Posterior vena cava (tissue), 2 donors: ENCODE measurements at regions of chr11 and their contacts with region 1.

Region 1: DNA sequence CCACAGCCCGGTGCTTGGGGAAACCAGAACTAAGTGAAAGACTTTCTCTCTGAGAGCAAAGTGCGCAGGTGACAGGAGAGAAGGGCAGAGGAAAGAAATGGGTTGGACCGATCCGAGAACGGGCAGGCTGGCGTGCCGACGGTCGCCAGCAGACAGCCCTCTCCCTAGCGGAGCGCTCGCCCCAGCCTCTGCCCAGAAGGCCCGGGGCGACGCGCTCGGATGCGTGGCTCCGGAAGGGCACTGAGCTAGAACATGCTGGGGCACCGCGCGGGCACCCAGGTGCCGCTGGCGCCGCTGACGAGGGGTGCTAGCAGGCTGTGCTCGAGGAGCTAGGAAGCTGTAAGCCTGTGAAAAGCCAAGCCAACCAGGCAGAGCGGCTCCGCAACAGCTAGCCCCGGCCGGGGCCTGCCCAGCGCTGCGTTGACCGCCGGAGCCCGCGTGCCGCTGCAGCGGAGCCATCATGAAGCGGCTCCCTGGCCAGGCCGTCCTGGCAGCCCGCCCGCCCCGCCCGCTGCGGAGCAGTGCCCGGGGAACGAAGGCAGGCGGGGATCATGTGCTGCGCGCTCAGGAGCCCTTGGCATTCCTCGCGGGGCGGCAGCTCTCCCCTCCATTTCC is 22.1 kb upstream of the RRAS2 start:
- DNase-seq: peak; percentile 89

Region 2: GRCh38 chr11:14320020-14320419 is 61.0 kb before region 1 on chr11:
- intact Hi-C with region 1: no loop called
- DNase-seq: no peak

Region 3: GRCh38 chr11:14446701-14447169 is 65.7 kb after region 1 on chr11:
- intact Hi-C with region 1: loop called in 1 of 2 experiments (anchors 2 kb)
- DNase-seq: no peak